AG04450 (cell line): ENCODE measurements at regions of chr1 and their contacts with region 1.

Region 1: DNA sequence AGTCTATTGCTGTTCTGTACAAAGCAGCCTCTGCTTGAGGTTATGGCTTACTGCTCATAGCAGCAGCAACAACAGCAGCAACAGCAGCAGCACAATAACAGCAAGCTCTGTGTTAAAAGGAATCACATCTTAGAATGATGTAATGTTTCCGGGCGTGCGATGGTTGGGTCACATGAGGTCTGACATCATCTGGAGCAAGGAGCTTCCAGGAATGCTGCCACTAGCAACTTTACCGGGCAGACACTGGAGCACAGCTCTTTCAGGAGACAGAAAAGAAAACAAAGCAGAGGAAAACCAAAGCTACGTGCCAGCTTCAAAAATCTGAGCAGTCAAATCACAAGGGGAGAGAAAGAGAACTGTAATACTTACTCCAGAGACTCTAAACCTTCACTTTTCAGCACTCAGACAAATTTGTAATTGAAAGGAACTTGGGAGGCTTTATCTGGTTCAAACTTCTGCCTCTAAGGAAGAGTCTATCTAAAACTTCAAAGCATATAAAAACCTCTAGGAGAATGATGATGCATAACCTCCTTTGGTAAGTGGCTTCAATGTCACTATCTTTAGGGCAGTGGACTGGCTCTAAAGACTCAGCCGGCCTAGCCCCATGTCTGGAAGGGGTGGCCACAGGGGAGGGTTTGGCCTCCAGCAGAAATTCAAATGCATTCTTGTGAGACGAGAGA is 28.3 kb upstream of the RAB3GAP2 start:
- DNase-seq: peak; percentile 79
- H3K4me3 ChIP-seq: peak overlapping the region; percentile 27
- H3K27ac ChIP-seq: peak overlapping the region; percentile 81
- H3K27me3 ChIP-seq: no peaks in the 10 kb centered on the region
- CTCF ChIP-seq: no peak

Region 2: DNA sequence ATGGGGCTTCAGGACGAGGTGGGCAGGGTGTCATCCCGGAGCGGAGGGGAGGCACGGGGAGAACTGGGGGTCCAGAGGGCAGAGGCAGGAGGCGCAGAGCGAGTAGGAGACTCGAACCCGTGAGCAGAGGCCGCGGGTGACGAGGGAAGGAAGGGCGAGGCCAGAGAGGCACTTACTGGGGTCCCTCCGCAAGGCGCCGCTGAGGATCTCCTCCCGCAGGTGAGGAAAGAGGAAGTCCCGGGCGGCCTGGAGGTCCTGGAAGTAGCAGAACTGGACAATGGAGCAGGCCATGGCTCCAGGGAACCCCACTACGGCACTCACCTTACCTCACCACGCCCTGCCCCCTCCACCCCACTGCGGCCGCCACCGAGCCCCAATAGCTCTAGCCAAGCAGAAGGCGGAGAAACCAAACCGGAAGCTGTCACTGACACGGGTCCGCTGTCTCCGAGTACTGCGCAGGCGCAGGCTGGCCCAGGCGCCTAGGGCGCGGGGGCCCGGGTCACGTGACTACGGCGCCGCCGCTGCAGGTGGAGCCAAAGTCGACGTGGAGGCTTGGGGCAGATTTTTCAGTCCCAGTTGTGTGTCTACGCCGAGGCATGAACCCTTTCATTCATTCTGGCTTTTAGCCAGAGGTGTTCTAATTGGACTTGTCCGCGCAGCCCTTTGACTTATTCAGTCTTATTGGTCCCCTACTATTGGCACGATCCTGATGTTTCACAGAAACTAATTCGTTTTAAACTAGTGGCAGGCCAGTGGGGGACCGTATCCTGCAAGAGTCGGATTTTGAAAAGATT is 28.3 kb before region 1 on chr1 and contains the start of gene RAB3GAP2:
- CTCF ChIA-PET with region 1: interaction called, 4 read pairs
- POLR2A ChIA-PET with region 1: interaction called, 10 read pairs
- DNase-seq: peak; percentile 72
- H3K4me3 ChIP-seq: peak within 1 kb of the TSS; percentile 97
- H3K27ac ChIP-seq: peak within 1 kb of the TSS; percentile 88
- H3K27me3 ChIP-seq: peaks cover 10% of the 10 kb centered on the region
- CTCF ChIP-seq: no peak
- polyA plus RNA-seq, gene RAB3GAP2: 38.2 and 43.6 TPM in 2 replicates